ENCODE measurements at regions of chr16 and their contacts with region 1.

Region 1: DNA sequence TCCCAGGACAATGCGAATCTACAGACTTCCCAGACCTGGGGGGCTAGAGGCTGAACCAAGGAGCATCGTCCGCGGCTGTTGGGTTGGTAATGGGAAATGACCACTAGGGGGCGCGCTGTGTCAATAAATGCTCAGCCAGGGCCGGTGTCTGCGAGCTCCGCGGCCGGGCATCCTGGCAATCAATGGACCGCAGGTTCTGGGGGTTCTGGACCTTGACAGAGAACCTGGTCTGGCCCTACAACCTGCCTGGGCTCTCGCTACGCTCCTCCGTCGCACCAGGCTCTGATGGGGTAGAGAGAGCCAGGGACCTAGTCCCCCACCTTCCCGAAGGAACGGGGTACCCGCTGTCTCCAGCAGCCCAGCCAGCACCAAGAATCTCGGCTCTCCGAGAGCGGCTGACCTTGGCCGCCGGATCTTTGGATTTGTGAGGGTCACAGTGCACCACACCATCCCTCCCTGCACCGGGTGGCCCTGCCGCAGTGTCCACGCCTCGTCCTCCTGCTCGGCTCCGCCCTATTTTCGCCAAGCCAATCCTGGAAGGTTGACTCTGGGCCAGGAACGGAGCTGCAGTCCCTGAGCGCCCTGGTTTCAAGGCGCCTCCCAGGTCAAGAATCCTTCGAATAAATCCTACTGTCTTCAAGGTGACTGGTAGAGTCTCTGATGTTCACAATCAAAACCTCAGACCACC is 20.4 kb upstream of the BEAN1 start:
- DNase-seq: no peak
- ATAC-seq: peak; percentile 97
- H3K4me3 ChIP-seq: peak overlapping the region; percentile 2; the same call in 1 of the 2 replicates
- H3K27ac ChIP-seq: no peak overlapping the region
- H3K4me1 ChIP-seq: peaks cover 4% of the 10 kb centered on the region; the same call in 1 of the 2 replicates
- H3K27me3 ChIP-seq: peaks cover 2% of the 10 kb centered on the region in 2 experiments; a peak in 2 of 4 replicates
- CTCF ChIP-seq: peak; percentile 69 to 93 (median 79)
- EP300 ChIP-seq: no peak
- POLR2A ChIP-seq: no peak
- RAD21 ChIP-seq: peak; percentile 85

Region 2: GRCh38 chr16:66147291-66147690 is 259.4 kb before region 1 on chr16:
- CTCF ChIA-PET with region 1: no interaction called
- POLR2A ChIA-PET with region 1: no interaction called
- RAD21 ChIA-PET with region 1: no interaction called
- SMC1A ChIA-PET with region 1: no interaction called
- in situ Hi-C with region 1: no loop called
- intact Hi-C with region 1: no loop called
- DNase-seq: no peak
- ATAC-seq: no peak
- H3K4me3 ChIP-seq: no peak overlapping the region
- H3K27ac ChIP-seq: no peak overlapping the region
- H3K4me1 ChIP-seq: no peaks in the 10 kb centered on the region
- H3K27me3 ChIP-seq: no peaks in the 10 kb centered on the region; a peak in 1 of 4 replicates
- CTCF ChIP-seq: no peak
- EP300 ChIP-seq: no peak
- POLR2A ChIP-seq: no peak
- RAD21 ChIP-seq: no peak

Region 3: DNA sequence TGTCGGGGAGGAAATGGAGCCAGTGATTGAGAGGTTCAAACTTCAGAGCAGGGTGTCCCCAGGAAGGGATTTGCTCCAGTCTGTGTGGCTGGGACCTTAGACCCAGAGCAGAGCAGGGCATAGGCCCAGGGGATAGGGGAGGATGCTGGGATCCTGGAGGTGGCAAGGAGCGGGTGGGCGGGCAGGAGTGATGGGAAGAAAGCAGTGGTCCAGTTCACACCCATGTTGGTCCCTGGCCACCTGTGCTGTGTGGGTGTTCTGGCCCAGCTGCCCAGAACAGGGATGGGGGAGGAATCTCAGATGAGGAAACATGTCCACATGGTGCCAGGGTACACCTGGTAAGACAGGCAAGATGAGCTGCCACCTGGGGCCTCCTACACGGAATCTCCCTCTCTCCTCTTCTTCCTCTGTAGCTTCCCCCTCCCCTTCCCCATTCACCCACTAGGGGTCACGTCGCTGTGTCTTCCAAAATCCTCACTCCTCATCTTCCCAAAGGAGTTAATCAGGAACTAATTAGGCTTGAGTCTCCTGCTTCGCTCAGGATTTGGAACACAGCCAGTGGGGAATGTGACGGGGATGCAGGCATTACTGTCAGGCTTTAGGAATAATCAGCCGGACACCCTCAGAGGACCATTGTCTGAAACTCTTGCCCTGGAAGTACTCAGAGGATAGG is 22.7 kb after region 1 on chr16:
- CTCF ChIA-PET with region 1: no interaction called
- POLR2A ChIA-PET with region 1: no interaction called
- RAD21 ChIA-PET with region 1: no interaction called
- SMC1A ChIA-PET with region 1: no interaction called
- in situ Hi-C with region 1: no loop called
- intact Hi-C with region 1: no loop called
- DNase-seq: no peak
- ATAC-seq: no peak
- H3K4me3 ChIP-seq: no peak overlapping the region
- H3K27ac ChIP-seq: no peak overlapping the region
- H3K4me1 ChIP-seq: no peaks in the 10 kb centered on the region
- H3K27me3 ChIP-seq: peaks cover 26 to 38% of the 10 kb centered on the region in 2 experiments
- CTCF ChIP-seq: no peak
- EP300 ChIP-seq: no peak
- POLR2A ChIP-seq: no peak
- RAD21 ChIP-seq: no peak

Region 4: DNA sequence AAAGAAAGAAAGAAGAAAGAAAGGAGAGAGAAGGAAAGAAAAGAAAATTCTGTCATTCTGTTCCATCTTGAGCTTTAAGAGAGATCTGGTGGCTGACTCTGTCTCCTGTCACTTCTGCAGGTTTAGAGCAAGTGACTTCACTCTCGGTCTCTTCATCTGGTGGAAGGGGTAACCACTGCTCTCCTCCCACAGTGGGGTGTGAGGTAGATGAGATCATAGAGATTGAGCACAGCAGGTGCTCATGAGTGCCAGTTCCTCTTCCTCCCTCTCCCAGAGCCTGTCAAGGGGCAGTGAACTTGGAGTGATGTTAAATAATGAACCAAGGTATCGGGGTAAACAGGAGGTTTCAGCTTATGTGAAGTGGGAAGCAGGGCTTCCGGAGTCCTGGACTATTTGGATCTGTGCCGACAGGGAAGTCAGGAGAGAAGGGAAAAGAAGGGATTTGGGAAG is 68.1 kb after region 1 on chr16:
- CTCF ChIA-PET with region 1: interaction called, 118 read pairs
- POLR2A ChIA-PET with region 1: no interaction called
- RAD21 ChIA-PET with region 1: interaction called, 17 read pairs
- SMC1A ChIA-PET with region 1: interaction called, 36 read pairs
- in situ Hi-C with region 1: loop called (anchors 5 kb)
- intact Hi-C with region 1: no loop called
- DNase-seq: peak; percentile 9
- ATAC-seq: peak; percentile 90
- H3K4me3 ChIP-seq: no peak overlapping the region
- H3K27ac ChIP-seq: no peak overlapping the region
- H3K4me1 ChIP-seq: no peaks in the 10 kb centered on the region
- H3K27me3 ChIP-seq: peaks cover 0 to 3% of the 10 kb centered on the region in 2 experiments; a peak in 1 of 4 replicates
- CTCF ChIP-seq: no peak
- EP300 ChIP-seq: no peak
- POLR2A ChIP-seq: no peak
- RAD21 ChIP-seq: no peak

Region 5: DNA sequence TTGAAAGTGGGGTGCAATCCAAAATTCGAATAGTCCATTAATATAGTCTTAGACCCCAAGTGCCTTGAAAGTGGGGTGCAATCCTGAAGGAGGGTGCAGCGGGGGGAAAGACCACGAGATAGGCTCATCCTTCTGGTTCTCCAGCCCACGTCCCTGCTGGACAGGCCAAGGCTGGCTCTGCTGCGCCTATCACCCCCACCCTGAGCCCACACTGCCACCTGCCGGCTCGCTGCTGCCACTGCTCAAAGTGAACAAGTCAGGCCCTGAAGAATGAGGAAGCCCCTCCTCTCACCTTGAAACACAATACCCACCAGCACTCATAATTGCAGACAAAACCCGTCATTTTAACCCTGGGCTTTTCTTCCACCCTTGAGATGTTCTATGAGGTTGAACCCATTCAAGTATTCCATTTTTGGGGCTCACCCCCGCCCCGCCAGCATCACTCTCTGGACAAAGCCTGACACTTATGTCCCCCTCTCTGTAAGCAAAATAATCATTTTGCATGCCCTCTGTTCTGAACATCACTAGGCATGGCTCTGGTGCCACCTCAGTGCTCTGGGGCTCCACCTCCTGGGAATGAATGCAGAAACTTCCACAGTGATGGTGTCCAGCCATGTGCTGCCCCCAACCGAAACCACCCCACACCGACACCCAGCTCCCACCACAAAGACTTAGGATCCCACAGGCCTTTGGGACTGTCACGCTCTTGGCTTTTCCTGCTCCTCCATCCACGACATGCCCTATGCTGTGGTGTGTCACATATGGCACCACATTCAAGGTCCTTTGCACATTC is 77.2 kb after region 1 on chr16:
- CTCF ChIA-PET with region 1: interaction called, 118 read pairs
- POLR2A ChIA-PET with region 1: no interaction called
- RAD21 ChIA-PET with region 1: interaction called, 22 read pairs
- SMC1A ChIA-PET with region 1: interaction called, 9 read pairs
- in situ Hi-C with region 1: loop called (anchors 5 kb)
- intact Hi-C with region 1: loop called (anchors 1 kb)
- DNase-seq: no peak
- ATAC-seq: peak; percentile 88
- H3K4me3 ChIP-seq: no peak overlapping the region
- H3K27ac ChIP-seq: no peak overlapping the region
- H3K4me1 ChIP-seq: peaks cover 5% of the 10 kb centered on the region
- H3K27me3 ChIP-seq: no peaks in the 10 kb centered on the region
- CTCF ChIP-seq: peak; percentile 96 to 99 (median 98)
- EP300 ChIP-seq: no peak
- POLR2A ChIP-seq: no peak
- RAD21 ChIP-seq: peak; percentile 90

Region 6: DNA sequence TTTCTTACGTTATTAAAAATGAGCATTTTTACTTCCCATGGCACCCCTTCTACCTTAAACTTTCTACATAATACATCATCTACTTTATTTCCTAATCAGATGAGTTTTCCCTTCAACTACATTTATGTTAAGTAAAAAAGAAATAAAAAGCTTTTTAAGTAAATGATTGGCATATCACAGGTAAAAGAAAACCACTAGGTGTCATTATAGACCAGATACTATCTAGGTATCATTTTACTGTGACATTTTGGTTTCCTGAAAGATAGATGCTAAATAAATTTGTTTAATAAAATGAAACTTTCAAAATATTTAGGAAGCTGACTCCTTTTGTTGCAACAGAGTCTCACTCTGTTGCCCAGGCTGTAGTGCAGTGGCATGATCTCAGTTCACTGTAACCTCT is 155.7 kb after region 1 on chr16:
- CTCF ChIA-PET with region 1: interaction called, 21 read pairs
- POLR2A ChIA-PET with region 1: no interaction called
- RAD21 ChIA-PET with region 1: no interaction called
- SMC1A ChIA-PET with region 1: interaction called, 4 read pairs
- in situ Hi-C with region 1: no loop called
- intact Hi-C with region 1: no loop called
- DNase-seq: no peak
- ATAC-seq: peak; percentile 19; the same call in 1 of the 3 replicates
- H3K4me3 ChIP-seq: no peak overlapping the region
- H3K27ac ChIP-seq: no peak overlapping the region
- H3K4me1 ChIP-seq: no peaks in the 10 kb centered on the region
- H3K27me3 ChIP-seq: no peaks in the 10 kb centered on the region
- CTCF ChIP-seq: no peak; a peak in 1 of 6 replicates
- EP300 ChIP-seq: no peak
- POLR2A ChIP-seq: no peak
- RAD21 ChIP-seq: peak; percentile 32

Region 7: DNA sequence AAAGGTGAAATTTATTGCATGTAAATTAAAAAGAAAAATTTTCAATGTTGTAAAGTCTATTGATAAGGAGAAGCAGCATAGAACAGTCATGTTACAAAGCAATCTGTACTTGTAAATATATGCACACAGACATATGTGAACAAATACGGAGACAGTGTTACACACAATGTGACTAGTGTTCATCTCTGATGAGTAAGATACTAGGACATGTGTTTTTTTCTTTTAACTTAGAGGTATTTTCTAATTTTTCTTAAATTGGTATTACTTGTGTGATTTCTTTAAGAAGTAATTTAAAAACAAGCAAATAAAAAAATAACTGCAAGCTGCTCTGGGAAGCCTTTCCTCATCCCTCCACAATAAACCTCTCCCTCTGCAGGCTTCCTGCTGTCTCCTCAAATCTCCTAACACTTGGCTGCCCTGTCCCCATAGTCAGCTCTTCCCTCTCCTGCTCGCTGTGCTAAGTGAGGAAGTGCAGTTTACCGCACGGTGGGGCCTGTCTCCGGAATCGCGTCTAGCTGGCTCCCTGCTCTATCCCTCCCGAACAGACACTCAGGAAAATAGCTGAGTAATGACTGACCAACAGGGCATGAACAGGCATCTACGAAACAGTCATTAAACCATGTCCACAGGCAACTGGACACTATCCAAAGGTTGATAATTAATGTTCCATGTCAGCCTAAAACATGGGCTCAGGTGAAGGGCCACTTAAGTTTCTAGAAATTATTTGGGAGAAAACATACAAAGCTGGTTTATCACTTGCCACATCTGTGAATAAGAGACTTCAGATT is 253.9 kb after region 1 on chr16:
- CTCF ChIA-PET with region 1: interaction called, 6 read pairs
- POLR2A ChIA-PET with region 1: no interaction called
- RAD21 ChIA-PET with region 1: interaction called, 6 read pairs
- SMC1A ChIA-PET with region 1: no interaction called
- in situ Hi-C with region 1: no loop called
- intact Hi-C with region 1: loop called (anchors 5 kb)
- DNase-seq: no peak
- ATAC-seq: peak; percentile 27; the same call in 1 of the 3 replicates
- H3K4me3 ChIP-seq: no peak overlapping the region
- H3K27ac ChIP-seq: no peak overlapping the region
- H3K4me1 ChIP-seq: no peaks in the 10 kb centered on the region
- H3K27me3 ChIP-seq: 0 out of 4 replicates have a peak, but pooled peaks cover 0 to 2% of the 10 kb centered on the region in 2 experiments
- CTCF ChIP-seq: no peak
- EP300 ChIP-seq: no peak
- POLR2A ChIP-seq: no peak
- RAD21 ChIP-seq: no peak

Region 8: DNA sequence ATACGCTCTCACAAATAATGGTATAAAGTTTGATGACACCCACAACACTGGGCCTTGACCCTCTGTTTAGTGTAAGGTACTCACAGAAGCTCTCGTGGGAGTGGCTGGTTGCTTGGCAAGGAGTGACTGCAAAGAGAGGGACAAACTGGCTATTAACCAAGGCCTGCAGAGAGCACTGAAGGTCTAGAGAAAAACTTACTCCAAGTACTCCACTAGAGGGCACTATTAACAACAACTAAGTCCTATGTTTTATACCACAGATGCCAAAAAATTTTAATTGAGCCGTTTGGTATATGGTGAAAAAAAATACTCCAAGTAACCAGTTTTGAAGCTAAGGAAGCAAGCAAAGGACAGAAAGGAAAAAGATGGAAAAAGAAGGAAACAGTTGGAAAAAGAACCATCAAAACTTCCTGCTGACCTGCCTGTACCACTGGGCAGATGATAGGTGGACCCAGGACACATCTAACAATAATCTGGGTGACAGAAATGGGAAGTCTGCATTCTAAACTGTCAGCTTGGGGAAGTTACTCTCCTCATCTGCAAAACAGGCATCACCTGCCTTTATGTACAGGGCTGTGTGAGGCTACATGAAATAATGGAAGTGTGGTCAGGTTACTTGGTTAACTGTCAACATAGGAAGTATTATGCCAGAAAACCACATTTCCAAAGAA is 321.6 kb after region 1 on chr16:
- CTCF ChIA-PET with region 1: interaction called, 5 read pairs
- POLR2A ChIA-PET with region 1: no interaction called
- RAD21 ChIA-PET with region 1: no interaction called
- SMC1A ChIA-PET with region 1: interaction called, 3 read pairs
- in situ Hi-C with region 1: no loop called
- intact Hi-C with region 1: loop called (anchors 5 kb)
- DNase-seq: no peak
- ATAC-seq: peak; percentile 97
- H3K4me3 ChIP-seq: no peak overlapping the region
- H3K27ac ChIP-seq: no peak overlapping the region
- H3K4me1 ChIP-seq: no peaks in the 10 kb centered on the region
- H3K27me3 ChIP-seq: no peaks in the 10 kb centered on the region
- CTCF ChIP-seq: peak; percentile 37 to 63 (median 59); a peak in 5 of 6 replicates
- EP300 ChIP-seq: no peak
- POLR2A ChIP-seq: no peak
- RAD21 ChIP-seq: peak; percentile 47

Region 9: DNA sequence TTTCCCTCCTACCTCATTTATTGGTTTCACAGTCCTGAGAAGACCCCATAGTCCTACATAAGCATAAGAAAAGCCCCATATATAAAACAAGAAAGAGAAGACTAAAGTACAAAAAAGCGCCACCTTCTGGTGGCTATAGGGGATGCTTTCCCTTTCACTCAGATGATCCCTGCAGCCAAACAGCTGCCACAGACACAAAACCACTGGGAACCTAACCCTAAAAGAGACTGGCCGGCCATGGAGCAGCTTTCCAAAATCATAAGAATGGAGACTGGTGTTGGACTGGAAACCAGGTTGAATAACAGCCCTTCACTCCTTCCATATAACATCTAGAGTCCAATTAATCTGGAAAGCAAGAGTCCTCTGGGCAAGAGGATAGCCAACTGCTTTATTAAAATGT is 333.3 kb after region 1 on chr16:
- CTCF ChIA-PET with region 1: interaction called, 9 read pairs
- POLR2A ChIA-PET with region 1: interaction called, 3 read pairs
- RAD21 ChIA-PET with region 1: interaction called, 4 read pairs
- SMC1A ChIA-PET with region 1: interaction called, 4 read pairs
- in situ Hi-C with region 1: loop called (anchors 5 kb)
- intact Hi-C with region 1: loop called (anchors 1 kb)
- DNase-seq: no peak
- ATAC-seq: peak; percentile 89
- H3K4me3 ChIP-seq: no peak overlapping the region
- H3K27ac ChIP-seq: no peak overlapping the region
- H3K4me1 ChIP-seq: no peaks in the 10 kb centered on the region
- H3K27me3 ChIP-seq: no peaks in the 10 kb centered on the region
- CTCF ChIP-seq: peak; percentile 47 to 56 (median 49)
- EP300 ChIP-seq: no peak
- POLR2A ChIP-seq: no peak
- RAD21 ChIP-seq: peak; percentile 32; the same call in 1 of the 2 replicates

Measured in GM12878 (cell line).